CD4-positive, alpha-beta T cell (primary cell): ENCODE measurements at regions of chr1 and their contacts with region 1.

Region 1: DNA sequence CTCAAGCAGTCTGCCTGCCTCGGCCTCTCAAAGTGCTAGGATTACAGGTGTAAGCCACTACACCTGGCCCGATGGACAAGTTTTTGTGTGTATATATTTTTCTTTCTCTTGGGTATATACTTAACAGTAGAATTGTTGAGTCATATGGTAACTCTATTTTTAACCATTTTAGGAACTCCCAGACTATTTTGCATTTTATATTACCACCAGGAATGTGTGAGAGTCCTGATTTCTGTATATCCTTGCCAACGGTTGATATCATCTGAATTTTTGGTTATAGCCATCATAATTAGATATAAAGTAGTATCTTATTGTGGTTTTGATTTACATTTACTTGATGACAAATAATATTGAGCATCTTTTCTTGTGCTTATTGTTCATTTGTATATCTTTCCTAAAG is 20.7 kb downstream of the FNBP1L start:
- DNase-seq: no peak
- ATAC-seq: no peak
- H3K4me3 ChIP-seq: no peak overlapping the region
- H3K4me3 Mint-ChIP-seq: no peak overlapping the region
- H3K27ac ChIP-seq: no peak overlapping the region
- H3K27ac Mint-ChIP-seq: no peak overlapping the region
- H3K4me1 ChIP-seq: no peaks in the 10 kb centered on the region
- H3K4me1 Mint-ChIP-seq: no peaks in the 10 kb centered on the region
- H3K27me3 ChIP-seq: no peaks in the 10 kb centered on the region
- H3K27me3 Mint-ChIP-seq: no peaks in the 10 kb centered on the region
- CTCF ChIP-seq: no peak

Region 2: GRCh38 chr1:93453911-93454310 is 14.8 kb before region 1 on chr1:
- CTCF ChIA-PET with region 1: no interaction called
- POLR2A ChIA-PET with region 1: no interaction called
- intact Hi-C with region 1: loop called in 1 of 2 experiments (anchors 1 kb)
- DNase-seq: no peak
- ATAC-seq: no peak
- H3K4me3 ChIP-seq: no peak overlapping the region
- H3K4me3 Mint-ChIP-seq: no peak overlapping the region
- H3K27ac ChIP-seq: no peak overlapping the region
- H3K27ac Mint-ChIP-seq: no peak overlapping the region
- H3K4me1 ChIP-seq: peaks cover 6% of the 10 kb centered on the region
- H3K4me1 Mint-ChIP-seq: peaks cover 13% of the 10 kb centered on the region
- H3K27me3 ChIP-seq: peaks cover 11 to 45% of the 10 kb centered on the region in 2 experiments
- H3K27me3 Mint-ChIP-seq: peaks cover 56% of the 10 kb centered on the region
- CTCF ChIP-seq: no peak

Region 3: GRCh38 chr1:93483200-93483599 is 14.5 kb after region 1 on chr1:
- CTCF ChIA-PET with region 1: no interaction called
- POLR2A ChIA-PET with region 1: no interaction called
- intact Hi-C with region 1: no loop called
- DNase-seq: no peak
- ATAC-seq: no peak
- H3K4me3 ChIP-seq: no peak overlapping the region
- H3K4me3 Mint-ChIP-seq: no peak overlapping the region
- H3K27ac ChIP-seq: no peak overlapping the region
- H3K27ac Mint-ChIP-seq: no peak overlapping the region
- H3K4me1 ChIP-seq: no peaks in the 10 kb centered on the region
- H3K4me1 Mint-ChIP-seq: no peaks in the 10 kb centered on the region
- H3K27me3 ChIP-seq: no peaks in the 10 kb centered on the region
- H3K27me3 Mint-ChIP-seq: no peaks in the 10 kb centered on the region
- CTCF ChIP-seq: no peak

Region 4: GRCh38 chr1:93661829-93662474 is 193.3 kb after region 1 on chr1:
- CTCF ChIA-PET with region 1: no interaction called
- POLR2A ChIA-PET with region 1: no interaction called
- intact Hi-C with region 1: no loop called
- DNase-seq: no peak
- ATAC-seq: no peak
- H3K4me3 ChIP-seq: no peak overlapping the region
- H3K4me3 Mint-ChIP-seq: no peak overlapping the region
- H3K27ac ChIP-seq: no peak overlapping the region
- H3K27ac Mint-ChIP-seq: no peak overlapping the region
- H3K4me1 ChIP-seq: no peaks in the 10 kb centered on the region
- H3K4me1 Mint-ChIP-seq: no peaks in the 10 kb centered on the region
- H3K27me3 ChIP-seq: no peaks in the 10 kb centered on the region
- H3K27me3 Mint-ChIP-seq: peaks cover 4% of the 10 kb centered on the region
- CTCF ChIP-seq: no peak